ENCODE measurements at regions of chr1 and their contacts with region 1.

Region 1: DNA sequence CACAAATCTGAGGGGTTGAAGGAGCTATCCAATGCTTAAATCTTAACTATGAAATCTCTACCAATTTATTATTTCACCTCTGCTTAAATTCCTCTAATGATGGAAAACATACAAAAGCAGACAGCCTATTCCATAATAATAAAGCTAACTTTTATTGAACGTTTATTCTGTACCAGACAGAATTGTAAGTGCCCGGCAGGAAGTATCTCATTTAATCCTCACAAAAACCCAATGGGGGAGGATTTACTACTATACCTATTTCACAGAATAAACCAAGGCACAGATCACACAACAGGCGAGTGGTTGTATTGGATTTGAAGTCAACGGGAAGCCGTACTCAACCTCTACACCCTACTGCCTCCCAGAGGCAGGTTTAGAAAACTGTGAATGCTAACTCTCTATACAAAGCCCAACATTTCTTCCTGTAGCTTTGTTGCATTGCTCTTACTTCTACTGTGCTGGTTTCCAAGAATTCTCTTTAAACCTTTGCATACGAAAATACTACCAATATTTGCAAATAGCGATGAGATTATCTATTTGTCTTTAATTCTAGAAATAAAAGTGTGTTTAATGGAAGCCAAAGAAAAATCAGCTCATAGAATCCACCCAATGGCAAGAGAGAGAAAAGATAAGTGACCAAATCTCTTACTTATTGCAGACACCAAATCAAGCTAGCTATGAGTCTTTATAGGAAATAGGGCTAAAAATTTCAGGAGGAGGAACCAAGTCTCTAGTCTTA is 33.5 kb upstream of the C1orf53 start:
- DNase-seq: peak; percentile 47 to 55 (median 50)
- H3K4me3 ChIP-seq: no peak overlapping the region
- H3K4me3 Mint-ChIP-seq: no peak overlapping the region
- H3K27ac ChIP-seq: no peak overlapping the region
- H3K27ac Mint-ChIP-seq: no peak overlapping the region
- H3K4me1 ChIP-seq: no peaks in the 10 kb centered on the region
- H3K4me1 Mint-ChIP-seq: no peaks in the 10 kb centered on the region
- H3K27me3 ChIP-seq: no peaks in the 10 kb centered on the region
- H3K27me3 Mint-ChIP-seq: no peaks in the 10 kb centered on the region

Region 2: DNA sequence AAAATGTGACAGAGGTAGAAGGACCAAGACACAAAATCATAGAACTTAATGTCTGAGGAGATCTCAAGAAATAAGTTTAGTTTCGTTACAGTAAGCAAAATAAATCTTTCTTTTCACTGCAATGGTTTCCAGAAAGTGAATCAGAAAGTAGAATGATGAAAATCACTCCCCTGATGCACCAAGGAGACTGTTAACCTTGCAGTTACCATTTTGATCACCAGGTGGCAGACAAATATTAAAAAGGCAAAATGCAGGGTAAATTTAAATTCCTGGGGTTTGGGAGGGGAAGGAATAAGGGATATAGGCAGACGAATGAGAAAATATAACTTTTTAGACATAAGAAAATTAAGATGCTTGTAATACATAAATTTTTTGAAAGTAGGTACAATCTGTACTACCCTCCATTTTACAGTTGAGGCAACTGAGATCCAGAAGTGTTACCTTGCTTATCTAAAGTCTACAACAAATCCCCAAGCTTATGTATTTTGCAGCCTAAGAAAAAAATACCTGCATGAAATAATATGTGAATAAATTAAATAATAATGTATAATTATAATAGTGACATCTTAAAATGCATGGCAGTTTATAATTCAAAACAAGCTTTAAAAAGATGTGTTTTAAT is 347.7 kb before region 1 on chr1:
- CTCF ChIA-PET with region 1: interaction called, 17 read pairs
- POLR2A ChIA-PET with region 1: no interaction called
- intact Hi-C with region 1: loop called (anchors 1 kb)
- DNase-seq: peak in 4 of 5 donors; percentile 15 to 34 (median 28)
- H3K4me3 ChIP-seq: no peak overlapping the region
- H3K4me3 Mint-ChIP-seq: no peak overlapping the region
- H3K27ac ChIP-seq: no peak overlapping the region
- H3K27ac Mint-ChIP-seq: no peak overlapping the region
- H3K4me1 ChIP-seq: no peaks in the 10 kb centered on the region
- H3K4me1 Mint-ChIP-seq: peaks cover 0 to 2% (median under 1%) of the 10 kb centered on the region in 4 donors
- H3K27me3 ChIP-seq: no peaks in the 10 kb centered on the region
- H3K27me3 Mint-ChIP-seq: no peaks in the 10 kb centered on the region

Region 3: DNA sequence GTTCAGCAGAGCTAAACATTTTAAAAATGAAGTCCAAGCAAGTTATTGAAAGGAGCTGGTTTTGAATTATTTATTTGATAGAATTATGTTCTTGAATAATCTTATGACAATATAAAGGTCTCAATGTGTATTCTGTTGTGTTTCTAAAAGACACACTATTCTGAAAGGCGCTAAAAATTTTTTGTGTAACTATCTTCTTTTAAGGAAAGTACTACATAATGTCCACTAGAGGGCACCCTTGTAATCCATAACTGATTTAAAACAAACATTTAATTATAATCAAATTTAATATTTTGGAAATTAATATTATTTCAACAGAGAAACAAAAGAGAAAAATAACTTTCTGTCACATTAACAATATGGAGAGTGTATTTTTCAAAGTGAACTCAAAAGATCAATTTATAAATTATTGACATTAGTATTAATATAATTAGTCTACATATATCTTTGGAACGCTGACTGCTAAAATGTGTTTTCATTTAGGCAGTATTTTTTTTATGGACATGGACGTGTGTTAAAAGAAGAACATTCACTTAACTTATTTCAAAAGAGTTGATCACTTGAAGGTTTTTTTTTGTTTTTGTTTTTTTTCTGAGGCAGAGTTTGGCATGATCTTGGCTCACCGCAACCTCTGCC is 342.1 kb before region 1 on chr1:
- CTCF ChIA-PET with region 1: interaction called, 17 read pairs
- POLR2A ChIA-PET with region 1: no interaction called
- intact Hi-C with region 1: loop called (anchors 1 kb)
- DNase-seq: peak in 4 of 5 donors; percentile 26 to 43 (median 37)
- H3K4me3 ChIP-seq: no peak overlapping the region
- H3K4me3 Mint-ChIP-seq: no peak overlapping the region
- H3K27ac ChIP-seq: no peak overlapping the region
- H3K27ac Mint-ChIP-seq: no peak overlapping the region
- H3K4me1 ChIP-seq: no peaks in the 10 kb centered on the region
- H3K4me1 Mint-ChIP-seq: no peaks in the 10 kb centered on the region
- H3K27me3 ChIP-seq: no peaks in the 10 kb centered on the region
- H3K27me3 Mint-ChIP-seq: no peaks in the 10 kb centered on the region

Region 4: GRCh38 chr1:197614916-197615692 is 253.8 kb before region 1 on chr1:
- CTCF ChIA-PET with region 1: interaction called, 67 read pairs
- POLR2A ChIA-PET with region 1: no interaction called
- intact Hi-C with region 1: loop called (anchors 1 kb)
- DNase-seq: peak in 4 of 5 donors; percentile 1 to 23 (median 12)
- H3K4me3 ChIP-seq: no peak overlapping the region
- H3K4me3 Mint-ChIP-seq: no peak overlapping the region
- H3K27ac ChIP-seq: no peak overlapping the region
- H3K27ac Mint-ChIP-seq: no peak overlapping the region
- H3K4me1 ChIP-seq: no peaks in the 10 kb centered on the region
- H3K4me1 Mint-ChIP-seq: no peaks in the 10 kb centered on the region
- H3K27me3 ChIP-seq: no peaks in the 10 kb centered on the region
- H3K27me3 Mint-ChIP-seq: no peaks in the 10 kb centered on the region

Region 5: DNA sequence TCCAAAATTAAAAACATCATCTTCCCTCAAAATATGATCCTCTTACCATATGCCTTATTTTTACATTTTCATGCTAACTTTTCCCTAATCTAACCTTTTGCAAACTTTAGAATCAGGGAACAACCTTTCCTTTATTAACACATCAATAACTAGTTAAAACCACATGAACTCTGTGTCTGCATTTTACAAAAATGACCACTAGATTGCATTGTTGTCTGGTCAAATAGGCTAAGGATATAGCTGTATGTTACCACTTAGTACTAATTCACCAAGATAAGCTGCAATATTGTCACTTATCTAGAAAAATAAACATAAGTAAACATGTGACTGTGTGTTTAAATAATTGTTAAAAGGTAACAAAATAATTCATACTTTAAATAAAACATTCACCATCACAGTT is 176.0 kb before region 1 on chr1:
- CTCF ChIA-PET with region 1: interaction called, 12 read pairs
- POLR2A ChIA-PET with region 1: interaction called, 3 read pairs
- intact Hi-C with region 1: loop called (anchors 1 kb)
- DNase-seq: no peak
- H3K4me3 ChIP-seq: no peak overlapping the region
- H3K4me3 Mint-ChIP-seq: no peak overlapping the region
- H3K27ac ChIP-seq: no peak overlapping the region
- H3K27ac Mint-ChIP-seq: no peak overlapping the region
- H3K4me1 ChIP-seq: peaks cover 16% of the 10 kb centered on the region
- H3K4me1 Mint-ChIP-seq: peaks cover 17 to 42% (median 25%) of the 10 kb centered on the region in 4 donors
- H3K27me3 ChIP-seq: no peaks in the 10 kb centered on the region
- H3K27me3 Mint-ChIP-seq: no peaks in the 10 kb centered on the region

Region 6: GRCh38 chr1:197775282-197776262 is 93.3 kb before region 1 on chr1 and contains the start of gene DENND1B:
- CTCF ChIA-PET with region 1: interaction called, 6 read pairs
- POLR2A ChIA-PET with region 1: interaction called, 3 read pairs
- intact Hi-C with region 1: loop called (anchors 2 kb)
- DNase-seq: peak; percentile 82 to 88 (median 83)
- H3K4me3 ChIP-seq: peak within 1 kb of the TSS; percentile 73 to 84
- H3K4me3 Mint-ChIP-seq: peak within 1 kb of the TSS; percentile 87 to 97 (median 92)
- H3K27ac ChIP-seq: peak within 1 kb of the TSS; percentile 68
- H3K27ac Mint-ChIP-seq: peak within 1 kb of the TSS; percentile 94 to 99 (median 98)
- H3K4me1 ChIP-seq: peaks cover 71% of the 10 kb centered on the region
- H3K4me1 Mint-ChIP-seq: peaks cover 56 to 73% (median 65%) of the 10 kb centered on the region in 4 donors
- H3K27me3 ChIP-seq: no peaks in the 10 kb centered on the region
- H3K27me3 Mint-ChIP-seq: no peaks in the 10 kb centered on the region
- total RNA-seq, gene DENND1B: 25.5 to 26.3 TPM

Region 7: GRCh38 chr1:197811769-197812168 is 57.2 kb before region 1 on chr1:
- CTCF ChIA-PET with region 1: no interaction called
- POLR2A ChIA-PET with region 1: no interaction called
- intact Hi-C with region 1: no loop called
- DNase-seq: no peak
- H3K4me3 ChIP-seq: no peak overlapping the region
- H3K4me3 Mint-ChIP-seq: no peak overlapping the region
- H3K27ac ChIP-seq: no peak overlapping the region
- H3K27ac Mint-ChIP-seq: no peak overlapping the region
- H3K4me1 ChIP-seq: no peaks in the 10 kb centered on the region
- H3K4me1 Mint-ChIP-seq: no peaks in the 10 kb centered on the region
- H3K27me3 ChIP-seq: no peaks in the 10 kb centered on the region
- H3K27me3 Mint-ChIP-seq: peaks cover 0 to 1% of the 10 kb centered on the region in 2 donors

Region 8: DNA sequence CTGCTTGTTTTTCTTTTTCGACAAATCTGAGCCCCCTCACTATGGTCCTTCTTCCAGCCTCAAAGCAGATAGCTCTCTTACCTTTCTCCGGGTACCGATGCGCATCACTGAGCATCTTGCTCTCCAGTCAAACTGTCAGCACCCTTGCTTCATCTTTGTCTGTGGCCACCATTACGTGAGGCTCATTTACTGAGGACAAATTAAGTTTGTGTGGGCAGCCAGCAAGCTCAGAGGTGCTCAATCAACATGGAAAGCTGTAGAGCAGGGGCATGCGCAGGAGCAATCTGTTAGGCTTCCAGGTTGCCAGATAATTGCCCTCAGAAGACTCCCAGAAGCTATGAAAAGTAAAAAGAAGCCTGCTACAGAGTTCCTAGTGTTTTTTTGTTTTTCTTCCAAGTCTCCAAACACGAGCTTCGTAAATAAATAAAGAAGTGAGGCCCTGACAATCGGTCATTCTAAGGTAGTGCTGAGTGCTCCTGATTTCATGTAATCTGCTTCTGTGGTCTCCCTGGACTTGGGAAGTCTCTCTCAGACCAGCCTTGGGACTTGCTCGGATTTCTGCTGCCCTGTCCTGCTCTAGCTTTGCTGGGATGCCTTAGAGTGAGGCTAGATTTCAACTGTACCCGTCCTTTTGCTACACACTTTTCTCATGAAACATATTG is 35.3 kb after region 1 on chr1:
- CTCF ChIA-PET with region 1: no interaction called
- POLR2A ChIA-PET with region 1: no interaction called
- intact Hi-C with region 1: no loop called
- DNase-seq: peak in 1 of 5 donors; percentile 4
- H3K4me3 ChIP-seq: no peak overlapping the region
- H3K4me3 Mint-ChIP-seq: peak overlapping the region in 3 of 8 donors; percentile 49 to 93 (median 53)
- H3K27ac ChIP-seq: no peak overlapping the region
- H3K27ac Mint-ChIP-seq: peak overlapping the region in 1 of 7 donors; percentile 28
- H3K4me1 ChIP-seq: peaks cover 25% of the 10 kb centered on the region
- H3K4me1 Mint-ChIP-seq: peaks cover 13 to 30% (median 23%) of the 10 kb centered on the region in 4 donors
- H3K27me3 ChIP-seq: peaks cover 59% of the 10 kb centered on the region
- H3K27me3 Mint-ChIP-seq: peaks cover 42 to 56% of the 10 kb centered on the region in 2 donors

Region 9: DNA sequence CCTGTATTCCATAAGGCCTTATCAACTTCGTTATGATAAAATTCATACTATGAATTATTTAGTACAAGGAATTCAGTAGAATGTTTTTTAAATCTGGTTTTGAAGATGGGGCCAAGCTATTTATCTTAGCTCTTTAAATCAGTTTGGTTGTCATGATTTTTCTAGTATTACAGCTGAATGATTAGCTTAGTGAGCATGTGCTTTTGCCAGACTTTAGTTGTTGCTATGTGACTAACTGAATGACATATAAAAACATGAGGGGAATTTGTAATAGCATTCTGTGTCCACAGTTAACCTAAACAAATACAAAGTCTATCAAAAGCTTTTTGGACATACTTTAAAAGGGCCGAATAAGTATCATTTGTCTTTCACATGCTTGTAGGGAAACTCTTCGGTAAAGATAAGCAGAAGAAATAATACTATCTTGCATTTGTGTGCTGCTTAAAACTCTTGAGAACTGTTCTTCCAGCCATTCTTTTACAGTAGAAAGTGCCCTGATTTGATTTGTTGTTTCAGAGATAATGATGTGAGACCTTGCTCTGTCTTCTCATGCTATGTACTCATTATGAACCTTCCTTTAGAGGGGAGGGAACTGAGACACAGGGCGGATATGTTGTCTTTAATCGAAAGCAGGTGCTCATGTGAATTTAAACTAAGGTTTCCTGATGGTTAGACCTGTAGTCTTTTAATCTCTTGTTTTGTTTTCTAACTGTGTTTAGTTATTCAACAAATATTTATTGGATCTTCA is 306.7 kb after region 1 on chr1:
- CTCF ChIA-PET with region 1: no interaction called
- POLR2A ChIA-PET with region 1: no interaction called
- intact Hi-C with region 1: no loop called
- DNase-seq: peak; percentile 34 to 53 (median 40)
- H3K4me3 ChIP-seq: peak overlapping the region in 1 of 2 donors; percentile 7
- H3K4me3 Mint-ChIP-seq: peak overlapping the region; percentile 33 to 81 (median 69)
- H3K27ac ChIP-seq: peak overlapping the region; percentile 42
- H3K27ac Mint-ChIP-seq: peak overlapping the region; percentile 79 to 96 (median 84)
- H3K4me1 ChIP-seq: peaks cover 98% of the 10 kb centered on the region
- H3K4me1 Mint-ChIP-seq: peaks cover 73 to 90% (median 81%) of the 10 kb centered on the region in 4 donors
- H3K27me3 ChIP-seq: no peaks in the 10 kb centered on the region
- H3K27me3 Mint-ChIP-seq: no peaks in the 10 kb centered on the region

Region 10: DNA sequence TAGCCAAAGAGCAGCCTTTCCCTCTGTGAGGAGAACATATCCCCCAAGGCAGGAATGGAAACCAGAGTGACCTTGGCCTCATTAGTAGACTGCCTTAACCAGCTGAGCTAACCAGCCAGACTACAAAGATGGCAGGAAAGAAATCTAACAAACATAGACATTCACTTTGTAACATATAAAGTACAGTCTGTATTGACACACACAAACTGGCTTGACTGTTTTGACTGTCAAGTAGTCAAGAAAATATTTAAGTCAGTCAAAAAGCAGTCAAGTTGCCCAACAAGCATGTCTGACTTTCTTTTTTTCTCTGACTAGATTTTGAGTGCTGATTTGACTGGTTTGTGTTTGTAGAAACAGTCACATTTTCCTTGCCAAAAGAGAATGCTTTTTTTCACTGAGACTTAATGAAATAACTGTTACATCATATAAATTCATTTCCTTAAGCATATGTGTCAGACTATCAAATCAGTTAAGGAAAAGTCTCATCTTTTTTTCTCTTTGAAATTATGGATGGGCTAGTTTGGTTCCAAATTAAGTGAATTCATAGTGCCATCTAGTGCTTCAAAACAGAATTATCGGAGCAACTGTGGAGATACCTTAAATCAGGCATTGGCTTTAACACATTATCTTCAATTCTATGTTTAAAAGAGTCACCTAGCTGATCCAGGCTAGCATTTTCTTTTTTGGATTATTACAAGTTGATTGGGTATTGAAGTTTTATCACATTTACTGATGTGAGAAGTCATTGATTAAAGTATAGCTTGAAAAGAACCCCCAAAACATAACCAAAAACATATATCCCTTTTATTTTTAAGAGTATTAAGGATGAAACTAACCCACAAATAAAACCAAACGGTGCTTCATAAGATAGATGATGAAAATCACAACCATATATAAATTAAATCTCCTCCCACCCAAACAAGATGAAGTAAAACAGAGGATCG is 596.6 kb after region 1 on chr1:
- CTCF ChIA-PET with region 1: no interaction called
- POLR2A ChIA-PET with region 1: no interaction called
- intact Hi-C with region 1: loop called (anchors 10 kb)
- DNase-seq: peak in 4 of 5 donors; percentile 30 to 36 (median 36)
- H3K4me3 ChIP-seq: no peak overlapping the region
- H3K4me3 Mint-ChIP-seq: no peak overlapping the region
- H3K27ac ChIP-seq: no peak overlapping the region
- H3K27ac Mint-ChIP-seq: no peak overlapping the region
- H3K4me1 ChIP-seq: no peaks in the 10 kb centered on the region
- H3K4me1 Mint-ChIP-seq: peaks cover 0 to 1% (median 0%) of the 10 kb centered on the region in 4 donors
- H3K27me3 ChIP-seq: no peaks in the 10 kb centered on the region
- H3K27me3 Mint-ChIP-seq: peaks cover 0 to under 1% of the 10 kb centered on the region in 2 donors